ENCODE measurements at regions of chr6 and their contacts with region 1.

Region 1: GRCh38 chr6:89387516-89388222 is 24.4 kb downstream of the RRAGD start:
- DNase-seq: no peak
- ATAC-seq: no peak
- H3K4me3 ChIP-seq: no peak overlapping the region
- H3K27ac ChIP-seq: no peak overlapping the region
- H3K4me1 ChIP-seq: no peaks in the 10 kb centered on the region
- H3K27me3 ChIP-seq: no peaks in the 10 kb centered on the region
- CTCF ChIP-seq: no peak

Region 2: GRCh38 chr6:89503641-89504040 is 116.0 kb after region 1 on chr6:
- CTCF ChIA-PET with region 1: interaction called, 10 read pairs
- POLR2A ChIA-PET with region 1: no interaction called
- in situ Hi-C with region 1: no loop called
- intact Hi-C with region 1: no loop called
- DNase-seq: no peak
- ATAC-seq: no peak
- H3K4me3 ChIP-seq: no peak overlapping the region
- H3K27ac ChIP-seq: no peak overlapping the region
- H3K4me1 ChIP-seq: no peaks in the 10 kb centered on the region
- H3K27me3 ChIP-seq: peaks cover 2% of the 10 kb centered on the region; the same call in 1 of the 2 replicates
- CTCF ChIP-seq: no peak